ENCODE measurements at regions of chr9 and their contacts with region 1.

Region 1: DNA sequence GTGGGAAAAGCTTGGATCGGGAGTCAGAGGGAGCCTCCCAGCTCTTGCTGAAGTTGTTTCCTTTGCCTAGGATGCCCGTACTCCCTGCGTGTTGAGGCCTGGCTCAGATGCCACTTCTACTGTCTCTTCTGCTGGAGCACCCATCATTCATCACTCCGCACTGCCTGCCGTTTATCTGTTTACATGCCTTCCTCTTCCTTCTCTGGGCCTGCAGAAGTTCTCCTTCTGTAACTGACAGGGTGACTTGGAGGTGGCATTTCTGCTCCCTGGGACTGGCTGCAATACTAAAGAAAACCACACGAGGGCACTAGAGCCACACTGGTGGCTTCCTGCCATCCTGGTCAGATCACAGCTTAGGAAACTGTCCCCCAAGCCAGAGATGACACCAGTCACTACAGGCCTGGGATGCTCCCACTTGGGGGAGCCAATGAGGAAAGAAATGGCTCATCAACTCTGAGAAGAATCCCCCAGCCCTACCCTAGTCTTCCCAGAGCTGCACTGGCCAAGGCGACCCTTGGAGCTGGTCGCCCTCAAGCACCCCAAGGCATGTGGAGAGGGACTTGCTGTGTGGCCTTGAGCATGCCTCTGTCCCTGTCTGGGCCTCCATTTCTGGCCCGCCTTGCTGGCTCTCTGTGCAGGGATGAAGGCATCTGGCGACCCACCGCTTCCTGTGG is 9.7 kb upstream of the SLC25A51 start:
- DNase-seq: peak in 4 of 5 donors; percentile 66 to 81 (median 78)
- ATAC-seq: peak; percentile 70 to 85 (median 82)
- H3K4me3 ChIP-seq: no peak overlapping the region
- H3K27ac ChIP-seq: peak overlapping the region in 1 of 12 donors; percentile 0
- H3K4me1 ChIP-seq: peaks cover 0 to 42% (median 28%) of the 10 kb centered on the region in 12 donors
- H3K27me3 ChIP-seq: no peaks in the 10 kb centered on the region
- CTCF ChIP-seq: peak in 11 of 12 donors; percentile 92 to 99 (median 98)
- POLR2A ChIP-seq: no peak

Region 2: GRCh38 chr9:37650299-37650872 is 263.2 kb before region 1 on chr9:
- intact Hi-C with region 1: no loop called
- DNase-seq: peak in 1 of 5 donors; percentile 23
- ATAC-seq: peak in 2 of 4 donors; percentile 3 to 17
- H3K4me3 ChIP-seq: peak overlapping the region in 9 of 12 donors; percentile 32 to 73 (median 64)
- H3K27ac ChIP-seq: no peak overlapping the region
- H3K4me1 ChIP-seq: peaks cover 3 to 16% (median 7%) of the 10 kb centered on the region in 12 donors
- H3K27me3 ChIP-seq: peaks cover 0 to 57% (median 9%) of the 10 kb centered on the region in 9 donors
- CTCF ChIP-seq: no peak
- POLR2A ChIP-seq: no peak

Region 3: GRCh38 chr9:37679649-37680402 is 233.8 kb before region 1 on chr9:
- intact Hi-C with region 1: no loop called
- DNase-seq: no peak
- ATAC-seq: no peak
- H3K4me3 ChIP-seq: no peak overlapping the region
- H3K27ac ChIP-seq: no peak overlapping the region
- H3K4me1 ChIP-seq: peaks cover 0 to 26% (median 0%) of the 10 kb centered on the region in 12 donors
- H3K27me3 ChIP-seq: no peaks in the 10 kb centered on the region
- CTCF ChIP-seq: no peak
- POLR2A ChIP-seq: no peak

Region 4: GRCh38 chr9:37963936-37964739 is 50.5 kb after region 1 on chr9:
- intact Hi-C with region 1: loop called in 1 of 10 experiments (anchors 5 kb)
- DNase-seq: peak in 1 of 5 donors; percentile 55
- ATAC-seq: peak in 3 of 4 donors; percentile 40 to 69 (median 54)
- H3K4me3 ChIP-seq: no peak overlapping the region
- H3K27ac ChIP-seq: peak overlapping the region in 2 of 12 donors; percentile 41 to 46
- H3K4me1 ChIP-seq: peaks cover 0 to 41% (median 20%) of the 10 kb centered on the region in 12 donors
- H3K27me3 ChIP-seq: no peaks in the 10 kb centered on the region
- CTCF ChIP-seq: no peak
- POLR2A ChIP-seq: no peak

Region 5: GRCh38 chr9:38026021-38026809 is 112.6 kb after region 1 on chr9:
- intact Hi-C with region 1: loop called in 1 of 10 experiments (anchors 5 kb)
- DNase-seq: peak in 4 of 5 donors; percentile 49 to 63 (median 56)
- ATAC-seq: peak; percentile 76 to 80 (median 76)
- H3K4me3 ChIP-seq: no peak overlapping the region
- H3K27ac ChIP-seq: peak overlapping the region; percentile 48 to 85 (median 78)
- H3K4me1 ChIP-seq: peaks cover 3 to 67% (median 50%) of the 10 kb centered on the region in 12 donors
- H3K27me3 ChIP-seq: no peaks in the 10 kb centered on the region
- CTCF ChIP-seq: no peak
- POLR2A ChIP-seq: no peak

Region 6: GRCh38 chr9:38160613-38161215 is 247.1 kb after region 1 on chr9:
- intact Hi-C with region 1: loop called (anchors 2 to 5 kb)
- DNase-seq: peak in 4 of 5 donors; percentile 61 to 67 (median 63)
- ATAC-seq: peak in 3 of 4 donors; percentile 59 to 61 (median 60)
- H3K4me3 ChIP-seq: no peak overlapping the region
- H3K27ac ChIP-seq: no peak overlapping the region
- H3K4me1 ChIP-seq: no peaks in the 10 kb centered on the region
- H3K27me3 ChIP-seq: no peaks in the 10 kb centered on the region
- CTCF ChIP-seq: peak; percentile 66 to 87 (median 82)
- POLR2A ChIP-seq: no peak

Region 7: GRCh38 chr9:38432922-38433510 is 519.4 kb after region 1 on chr9:
- intact Hi-C with region 1: loop called in 1 of 10 experiments (anchors 5 kb)
- DNase-seq: no peak
- ATAC-seq: peak in 1 of 4 donors; percentile 19
- H3K4me3 ChIP-seq: no peak overlapping the region
- H3K27ac ChIP-seq: no peak overlapping the region
- H3K4me1 ChIP-seq: no peaks in the 10 kb centered on the region
- H3K27me3 ChIP-seq: peaks cover 0 to 19% (median 0%) of the 10 kb centered on the region in 9 donors
- CTCF ChIP-seq: peak; percentile 26 to 67 (median 54)
- POLR2A ChIP-seq: no peak